Posterior cingulate gyrus (tissue), 11 donors: ENCODE measurements at regions of chr15 and their contacts with region 1.

Region 1: GRCh38 chr15:25508369-25509002 is 69.7 kb upstream of the UBE3A start:
- DNase-seq: no peak

Region 2: DNA sequence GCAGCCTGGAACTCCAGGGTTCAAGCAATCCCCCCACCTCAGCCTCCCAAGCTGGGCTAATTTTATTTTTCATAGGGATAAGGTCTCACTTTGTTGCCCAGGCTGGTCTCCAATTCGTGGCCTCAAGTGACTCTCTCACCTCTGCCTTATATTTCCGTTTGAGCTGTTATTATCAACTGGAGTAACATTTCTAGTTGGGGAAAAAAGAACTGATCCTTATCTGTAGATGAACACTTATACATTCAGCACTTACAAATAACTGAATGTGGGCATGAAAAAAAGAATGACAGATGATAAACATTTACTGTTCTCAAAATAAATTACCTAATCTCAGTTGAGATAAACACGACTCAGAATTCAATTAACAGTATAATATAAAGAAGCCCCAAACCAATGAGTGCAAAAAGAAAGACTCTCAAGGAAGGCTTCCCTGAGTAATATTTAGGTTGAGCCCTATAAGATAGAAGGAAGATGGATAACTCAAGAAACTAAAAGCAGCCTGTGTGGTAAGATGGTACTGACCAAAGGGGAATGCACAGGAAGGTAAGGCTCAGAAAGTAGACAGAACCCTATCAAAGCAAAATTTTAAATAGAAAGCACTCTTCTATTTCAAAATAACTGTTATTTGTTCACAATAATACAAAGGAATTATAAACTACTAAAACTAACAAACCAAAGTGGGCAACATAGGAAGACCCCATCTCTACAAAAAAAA is 81.4 kb before region 1 on chr15:
- intact Hi-C with region 1: no loop called
- DNase-seq: no peak

Region 3: DNA sequence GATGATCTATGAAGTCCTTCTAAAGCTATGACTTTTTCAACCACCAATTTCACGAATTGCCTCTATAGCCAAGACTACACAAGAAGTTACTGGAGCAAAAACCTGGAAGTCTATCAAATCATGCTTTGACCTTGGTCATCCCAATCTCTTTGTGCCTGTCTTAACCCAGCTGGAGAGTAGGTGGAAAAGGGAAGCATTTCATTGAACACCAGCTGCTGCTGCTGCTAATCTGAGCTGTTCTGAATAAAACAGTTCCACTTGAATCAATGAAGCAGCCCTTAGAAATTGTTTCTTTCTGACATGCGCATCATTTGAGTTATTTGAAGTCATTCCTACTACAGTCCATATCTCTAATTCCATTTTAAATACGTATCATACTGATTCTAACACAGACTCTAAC is 62.4 kb before region 1 on chr15:
- intact Hi-C with region 1: no loop called
- DNase-seq: no peak

Region 4: DNA sequence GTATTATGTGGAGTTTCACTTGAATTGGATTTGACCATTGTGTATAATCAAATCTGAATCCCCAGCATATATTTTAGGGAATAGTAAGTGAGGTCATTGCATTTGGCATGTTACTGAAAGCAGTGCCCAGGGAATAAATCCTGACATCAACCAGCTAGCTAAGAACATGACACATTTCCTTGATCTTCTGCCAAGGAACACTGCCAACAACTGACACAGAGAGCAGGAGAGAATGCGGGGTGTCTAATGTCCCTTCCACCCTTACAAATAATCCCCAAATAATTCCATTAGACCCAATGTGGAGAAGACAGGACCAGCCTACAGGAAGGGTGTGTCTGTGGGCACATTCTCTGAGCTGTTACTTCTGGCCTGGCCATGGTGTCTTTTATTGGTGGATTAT is 39.1 kb before region 1 on chr15:
- intact Hi-C with region 1: no loop called
- DNase-seq: no peak

Region 5: GRCh38 chr15:25693321-25694237 is 185.1 kb after region 1 on chr15:
- intact Hi-C with region 1: loop called (anchors 2 kb)
- DNase-seq: peak in 4 of 10 donors; percentile 28 to 81 (median 36)

Region 6: GRCh38 chr15:26260517-26261133 is 752.1 kb after region 1 on chr15:
- intact Hi-C with region 1: loop called (anchors 2 kb)
- DNase-seq: peak in 5 of 10 donors; percentile 32 to 88 (median 36)

Region 7: GRCh38 chr15:26864664-26865191 is 1356.2 kb after region 1 on chr15:
- intact Hi-C with region 1: loop called (anchors 2 kb)
- DNase-seq: peak in 5 of 10 donors; percentile 32 to 85 (median 51)